Esophagus muscularis mucosa (tissue), 4 donors: ENCODE measurements at regions of chr1 and their contacts with region 1.

Region 1: GRCh38 chr1:41232305-41232704 is 9.8 kb downstream of the SCMH1 start:
- DNase-seq: no peak
- H3K4me3 ChIP-seq: no peak overlapping the region
- H3K27ac ChIP-seq: no peak overlapping the region
- H3K4me1 ChIP-seq: peaks cover 0 to 26% (median 25%) of the 10 kb centered on the region in 4 donors
- H3K27me3 ChIP-seq: no peaks in the 10 kb centered on the region
- CTCF ChIP-seq: no peak
- EP300 ChIP-seq: no peak
- POLR2A ChIP-seq: no peak

Region 2: DNA sequence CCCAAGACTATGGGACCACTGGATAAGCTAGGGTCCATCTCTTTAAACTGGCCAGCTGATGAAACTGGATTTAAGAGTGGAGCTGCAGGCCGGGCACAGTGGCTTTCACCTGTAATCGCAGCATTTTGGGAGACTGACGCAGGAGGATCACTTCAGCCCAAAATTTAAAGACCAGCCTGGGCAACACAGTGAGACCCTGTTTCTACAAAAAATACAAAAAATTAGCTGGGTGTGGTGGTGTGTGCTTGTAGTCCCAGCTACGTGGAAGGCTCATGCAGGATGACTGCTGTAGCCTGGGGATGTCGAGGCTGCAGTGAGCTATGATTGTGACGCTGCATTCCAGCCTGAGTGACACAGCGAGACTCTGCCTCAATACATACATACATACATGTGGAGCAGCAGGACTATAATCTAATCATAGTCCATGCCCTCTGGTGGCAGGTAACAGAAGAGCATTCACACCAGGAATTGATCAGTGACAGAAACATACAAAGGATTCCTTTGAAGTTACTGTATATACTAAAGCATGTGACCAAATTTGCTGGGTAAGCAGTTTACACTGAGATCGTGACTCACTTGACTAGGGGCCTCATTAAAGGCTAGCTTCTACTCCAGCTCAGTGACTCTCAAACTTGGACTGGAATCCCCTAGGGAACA is 109.3 kb before region 1 on chr1:
- intact Hi-C with region 1: loop called (anchors 5 kb)
- DNase-seq: no peak
- H3K4me3 ChIP-seq: no peak overlapping the region
- H3K27ac ChIP-seq: no peak overlapping the region
- H3K4me1 ChIP-seq: no peaks in the 10 kb centered on the region
- H3K27me3 ChIP-seq: no peaks in the 10 kb centered on the region
- CTCF ChIP-seq: peak; percentile 22 to 53 (median 34)
- EP300 ChIP-seq: no peak
- POLR2A ChIP-seq: no peak

Region 3: DNA sequence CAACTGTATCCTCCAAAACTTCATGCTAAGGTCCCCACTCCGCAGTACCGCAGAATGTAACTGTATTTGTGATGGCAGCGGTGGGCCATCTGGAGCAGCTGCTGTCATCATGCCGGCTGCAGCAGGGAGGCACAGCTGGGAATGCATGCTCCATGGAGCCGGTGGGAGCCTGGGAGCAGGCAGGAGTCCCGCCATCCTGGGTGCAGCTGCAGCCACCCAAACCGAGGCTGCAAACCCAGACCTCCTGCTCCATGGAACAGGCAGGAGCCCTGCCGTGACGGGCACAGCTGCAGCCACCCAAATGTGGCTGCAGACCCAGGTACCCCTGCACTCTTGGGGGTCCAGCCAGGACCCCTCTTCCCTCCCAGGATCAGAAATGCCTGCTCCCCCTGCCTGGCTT is 70.5 kb before region 1 on chr1:
- intact Hi-C with region 1: loop called (anchors 5 kb)
- DNase-seq: no peak
- H3K4me3 ChIP-seq: no peak overlapping the region
- H3K27ac ChIP-seq: no peak overlapping the region
- H3K4me1 ChIP-seq: peaks cover 0 to 9% (median 6%) of the 10 kb centered on the region in 4 donors
- H3K27me3 ChIP-seq: no peaks in the 10 kb centered on the region
- CTCF ChIP-seq: no peak
- EP300 ChIP-seq: no peak
- POLR2A ChIP-seq: no peak